Aorta (tissue), 5 donors: ENCODE measurements at regions of chr3 and their contacts with region 1.

Region 1: DNA sequence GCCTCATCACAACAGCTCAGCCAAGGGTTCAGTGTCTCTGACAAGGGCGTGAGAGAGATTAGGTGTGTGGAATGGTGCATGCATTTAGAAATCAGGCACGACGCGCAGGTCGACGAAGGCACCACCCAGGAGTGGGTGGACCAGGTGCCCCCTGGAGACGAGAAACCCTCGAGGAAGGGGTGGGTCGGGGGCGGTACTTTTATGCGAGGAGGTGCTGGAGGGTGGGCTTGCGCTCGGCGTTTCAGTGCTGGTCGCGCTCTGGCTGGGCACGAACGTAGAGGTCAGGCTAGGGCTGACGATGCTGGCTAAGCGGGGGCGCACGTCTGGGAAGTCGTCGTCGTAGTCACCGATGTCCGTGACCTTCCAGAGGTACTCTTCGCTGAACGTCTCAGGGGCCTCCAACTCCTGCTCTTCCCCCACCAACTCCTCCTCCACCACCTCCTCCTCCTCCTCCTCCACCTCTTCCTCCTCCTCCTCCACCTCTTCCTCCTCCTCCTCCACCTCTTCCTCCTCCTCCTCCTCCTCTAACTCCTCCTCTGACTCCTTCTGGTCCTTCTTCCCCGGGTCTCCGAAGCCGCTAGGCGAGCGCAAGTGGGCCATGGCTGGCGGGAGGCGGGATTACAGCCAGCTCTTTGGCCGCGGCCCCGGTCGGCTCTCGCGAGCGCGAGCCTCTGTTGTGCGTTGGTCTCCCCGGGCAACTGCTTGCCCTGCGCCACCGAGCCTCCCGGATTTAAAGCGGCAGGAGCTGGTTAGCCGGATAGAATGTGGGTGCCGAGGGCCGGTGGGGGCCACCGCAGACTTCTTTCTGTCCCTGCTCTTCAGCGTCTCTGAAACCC is at the start of gene ERICH6:
- DNase-seq: peak; percentile 96 to 97
- ATAC-seq: peak; percentile 98
- H3K4me3 ChIP-seq: peak within 1 kb of the TSS; percentile 23 to 86
- H3K27ac ChIP-seq: peak within 1 kb of the TSS in 1 of 2 donors; percentile 62
- H3K4me1 ChIP-seq: no peaks in the 10 kb centered on the region
- H3K27me3 ChIP-seq: no peaks in the 10 kb centered on the region
- total RNA-seq, gene ERICH6: 0.18 TPM in 1 of 2 donors, not detected in the other

Region 2: DNA sequence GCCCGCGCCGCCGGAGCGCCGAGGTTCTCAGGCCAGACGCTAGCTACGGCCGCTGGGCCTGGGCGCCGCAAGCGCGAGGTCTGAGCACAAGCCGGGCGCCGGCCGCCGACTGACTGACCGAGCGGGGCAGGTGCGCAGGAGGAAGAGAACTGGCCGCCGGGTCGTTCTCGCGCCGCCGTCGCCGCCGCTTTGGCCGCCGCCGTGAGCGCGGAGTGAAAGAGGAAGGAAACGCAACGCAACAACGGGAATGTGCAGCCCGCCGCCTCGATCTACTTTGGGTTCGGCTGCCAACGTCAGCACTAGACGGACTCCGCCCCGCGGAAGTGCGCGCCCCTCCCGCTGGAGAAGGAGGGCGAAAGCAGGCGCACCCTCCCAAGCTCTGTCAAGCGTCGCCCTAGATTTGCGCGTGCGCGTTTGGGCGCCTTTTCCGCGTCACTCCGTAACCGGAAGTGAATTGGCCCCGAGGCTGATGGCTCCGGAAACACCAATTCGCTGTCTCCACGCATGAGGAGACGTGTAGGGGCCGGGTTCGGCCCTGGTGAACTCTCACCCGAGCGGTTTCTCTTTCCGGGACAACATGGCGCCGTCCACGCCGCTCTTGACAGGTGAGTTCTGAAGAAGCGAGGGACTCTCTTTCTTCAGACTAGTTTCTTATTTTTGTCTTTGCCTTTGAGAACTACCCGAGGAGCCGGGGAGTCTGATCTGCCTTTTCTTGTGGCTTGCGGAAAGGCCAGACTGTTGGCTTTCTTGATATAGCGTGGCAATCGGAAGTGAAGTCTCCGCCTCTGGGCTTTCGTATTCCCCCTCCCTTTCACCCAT is 157.1 kb before region 1 on chr3 and contains the starts of genes EIF2A and SERP1:
- intact Hi-C with region 1: loop called in 1 of 2 experiments (anchors 10 kb)
- DNase-seq: peak; percentile 99
- ATAC-seq: peak; percentile 99
- H3K4me3 ChIP-seq: peak within 1 kb of the TSS; percentile 90 to 95
- H3K27ac ChIP-seq: peak within 1 kb of the TSS; percentile 61 to 89
- H3K4me1 ChIP-seq: peaks cover 0 to 6% of the 10 kb centered on the region in 2 donors
- H3K27me3 ChIP-seq: no peaks in the 10 kb centered on the region
- total RNA-seq, gene EIF2A: 72.8 to 82.7 TPM
- total RNA-seq, gene SERP1: 74.4 to 78.8 TPM

Region 3: DNA sequence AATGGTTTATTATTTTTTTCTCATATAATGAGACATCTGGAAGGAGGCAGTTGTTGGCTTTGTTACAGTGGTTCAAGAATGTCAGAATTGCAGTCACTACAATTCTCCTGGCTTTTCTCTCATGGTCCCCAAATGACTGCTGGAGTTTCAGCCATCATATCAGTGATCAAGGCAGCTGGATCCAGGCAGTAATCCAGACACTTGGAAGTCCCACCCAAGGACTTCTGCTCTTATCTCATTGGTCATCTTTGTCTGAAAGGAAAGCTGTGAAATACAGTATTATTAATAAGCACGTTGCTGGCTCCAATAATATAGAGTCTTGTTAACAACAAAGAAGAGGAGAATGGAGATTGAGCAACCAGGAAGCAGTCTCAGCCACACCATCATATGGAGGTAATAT is 359.1 kb after region 1 on chr3:
- intact Hi-C with region 1: no loop called
- DNase-seq: no peak
- ATAC-seq: no peak
- H3K4me3 ChIP-seq: no peak overlapping the region
- H3K27ac ChIP-seq: no peak overlapping the region
- H3K4me1 ChIP-seq: no peaks in the 10 kb centered on the region
- H3K27me3 ChIP-seq: no peaks in the 10 kb centered on the region